CD14-positive monocyte (primary cell): ENCODE measurements at regions of chr19 and their contacts with region 1.

Region 1: GRCh38 chr19:51637362-51637978 is 7.3 kb upstream of the SIGLEC5 start:
- DNase-seq: peak in 1 of 3 donors; percentile 55
- H3K4me3 ChIP-seq: no peak overlapping the region
- H3K4me3 Mint-ChIP-seq: no peak overlapping the region
- H3K27ac ChIP-seq: no peak overlapping the region
- H3K27ac Mint-ChIP-seq: peak overlapping the region in 3 of 7 donors; percentile 62 to 86 (median 63)
- H3K4me1 ChIP-seq: peaks cover 33 to 36% of the 10 kb centered on the region in 2 donors
- H3K4me1 Mint-ChIP-seq: peaks cover 59% of the 10 kb centered on the region
- H3K27me3 ChIP-seq: no peaks in the 10 kb centered on the region
- H3K27me3 Mint-ChIP-seq: no peaks in the 10 kb centered on the region
- CTCF ChIP-seq: peak; percentile 89

Region 2: GRCh38 chr19:51600940-51601580 is 36.4 kb before region 1 on chr19:
- intact Hi-C with region 1: loop called in 1 of 2 experiments (anchors 5 kb)
- DNase-seq: peak; percentile 12 to 29 (median 16)
- H3K4me3 ChIP-seq: no peak overlapping the region
- H3K4me3 Mint-ChIP-seq: peak overlapping the region in 1 of 2 donors; percentile 73
- H3K27ac ChIP-seq: no peak overlapping the region
- H3K27ac Mint-ChIP-seq: no peak overlapping the region
- H3K4me1 ChIP-seq: peaks cover 3 to 11% of the 10 kb centered on the region in 2 donors
- H3K4me1 Mint-ChIP-seq: peaks cover 2% of the 10 kb centered on the region
- H3K27me3 ChIP-seq: peaks cover 15 to 54% of the 10 kb centered on the region in 2 donors
- H3K27me3 Mint-ChIP-seq: peaks cover 42 to 46% (median 44%) of the 10 kb centered on the region in 3 donors
- CTCF ChIP-seq: no peak